A673 (cell line): ENCODE measurements at regions of chr12 and their contacts with region 1.

Region 1: GRCh38 chr12:113214938-113215400 is 6.3 kb upstream of the TPCN1 start:
- DNase-seq: no peak
- H3K4me3 ChIP-seq: no peak overlapping the region
- H3K27ac ChIP-seq: no peak overlapping the region
- H3K4me1 ChIP-seq: no peaks in the 10 kb centered on the region
- H3K27me3 ChIP-seq: no peaks in the 10 kb centered on the region
- CTCF ChIP-seq: no peak

Region 2: GRCh38 chr12:113174461-113175384 is 40.2 kb before region 1 on chr12:
- CTCF ChIA-PET with region 1: interaction called, 10 read pairs
- POLR2A ChIA-PET with region 1: no interaction called
- intact Hi-C with region 1: no loop called
- DNase-seq: peak; percentile 71
- H3K4me3 ChIP-seq: no peak overlapping the region
- H3K27ac ChIP-seq: no peak overlapping the region
- H3K4me1 ChIP-seq: no peaks in the 10 kb centered on the region
- H3K27me3 ChIP-seq: no peaks in the 10 kb centered on the region
- CTCF ChIP-seq: peak; percentile 97